AG04450 (cell line): ENCODE measurements at regions of chr19 and their contacts with region 1.

Region 1: DNA sequence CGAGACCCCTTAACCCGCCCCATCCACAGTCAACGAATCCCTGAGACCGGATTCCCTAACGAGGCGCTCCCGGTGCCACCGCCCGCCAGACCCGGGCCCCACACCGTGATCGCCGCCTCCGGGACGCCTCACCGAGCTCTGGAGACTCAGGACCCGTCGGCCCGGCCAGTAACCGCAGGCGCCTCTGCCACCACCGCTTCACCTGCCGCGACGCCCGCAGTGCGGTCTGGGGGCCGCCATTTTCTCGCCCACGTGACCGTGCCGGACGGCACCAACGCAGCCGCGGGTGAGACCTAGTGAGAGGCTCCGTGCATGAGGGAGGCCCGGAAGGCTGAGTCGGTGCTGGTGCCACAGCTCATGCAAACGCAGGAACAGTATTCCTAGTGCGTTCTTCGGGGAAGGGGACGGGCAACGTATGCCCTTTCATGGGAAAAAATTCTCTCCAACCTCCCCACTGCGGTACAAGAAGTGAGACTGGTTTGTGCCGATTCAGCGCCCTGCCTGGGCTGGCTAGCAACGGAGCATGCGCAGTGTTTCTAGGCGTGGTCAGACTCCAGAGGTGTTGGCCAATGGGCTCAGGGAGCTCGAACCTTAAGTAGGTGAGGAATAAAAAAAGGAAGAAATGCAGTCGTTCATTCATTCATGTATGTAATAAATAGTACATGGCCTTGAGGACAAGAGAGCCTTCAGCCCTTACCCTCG is at the start of gene DOHH:
- DNase-seq: peak; percentile 95
- H3K4me3 ChIP-seq: peak within 1 kb of the TSS; percentile 95
- H3K27ac ChIP-seq: peak within 1 kb of the TSS; percentile 97
- H3K27me3 ChIP-seq: no peaks in the 10 kb centered on the region
- CTCF ChIP-seq: no peak
- polyA plus RNA-seq, gene DOHH: 3.4 and 4.2 TPM in 2 replicates

Region 2: DNA sequence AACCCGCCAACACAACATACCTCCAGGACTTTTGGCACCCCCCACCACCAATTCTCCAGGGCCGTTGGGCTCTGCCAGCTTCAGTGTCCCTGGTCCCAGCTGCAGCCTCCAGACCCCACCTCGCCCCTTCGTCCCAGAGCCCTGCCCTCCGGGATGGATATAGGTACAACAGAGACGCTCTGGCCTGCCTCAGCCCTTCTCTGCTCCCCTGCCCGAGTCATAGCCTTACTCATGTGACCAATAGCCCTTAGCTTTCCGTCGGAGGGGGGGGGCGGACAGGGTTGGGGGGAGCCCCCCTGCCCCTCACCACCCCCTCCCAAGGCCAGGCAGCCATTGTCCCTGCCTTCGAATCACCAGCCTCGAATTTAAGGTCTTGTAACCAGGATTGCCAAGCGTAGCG is 205.0 kb before region 1 on chr19:
- CTCF ChIA-PET with region 1: no interaction called
- POLR2A ChIA-PET with region 1: interaction called, 11 read pairs
- DNase-seq: no peak
- H3K4me3 ChIP-seq: no peak overlapping the region
- H3K27ac ChIP-seq: no peak overlapping the region
- H3K27me3 ChIP-seq: peaks cover 17% of the 10 kb centered on the region
- CTCF ChIP-seq: no peak

Region 3: DNA sequence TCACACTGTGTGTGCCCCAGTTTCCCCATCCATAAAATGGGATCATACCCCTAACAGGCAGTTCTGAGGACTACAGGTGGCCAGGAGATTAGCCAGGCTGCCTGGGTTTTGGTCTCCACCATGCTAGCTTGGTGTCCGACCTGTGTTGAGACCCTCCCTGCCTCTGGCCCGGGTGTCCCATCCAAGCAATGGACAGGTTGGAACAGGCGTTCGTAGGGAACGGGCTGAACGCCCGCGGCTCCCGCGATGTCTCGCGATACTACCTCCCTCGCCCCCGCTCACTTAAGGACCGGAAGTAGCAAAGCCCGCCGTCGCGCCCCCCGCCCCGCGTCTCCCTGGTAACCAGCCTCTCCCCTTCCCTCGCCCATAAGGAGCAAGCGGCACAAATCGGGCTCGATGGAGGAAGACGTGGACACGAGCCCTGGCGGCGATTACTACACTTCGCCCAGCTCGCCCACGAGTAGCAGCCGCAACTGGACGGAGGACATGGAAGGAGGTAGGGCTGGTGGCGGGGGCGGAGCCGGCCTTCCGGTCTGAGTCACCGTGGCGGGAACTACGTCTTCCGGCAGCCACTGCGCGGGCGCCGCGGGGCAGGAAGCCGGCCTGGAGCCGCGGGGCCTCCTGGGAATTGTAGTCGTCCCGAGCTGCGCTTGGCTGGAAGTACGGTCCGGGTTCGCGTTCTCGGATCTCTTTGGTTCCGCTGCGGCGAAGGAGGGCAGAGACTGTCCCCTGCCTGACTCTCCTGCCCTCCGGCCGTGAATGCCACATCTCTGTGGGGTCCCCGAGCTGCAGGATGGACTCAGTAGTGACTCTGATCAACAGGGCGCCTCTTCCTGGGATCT is 65.6 kb before region 1 on chr19:
- CTCF ChIA-PET with region 1: no interaction called
- POLR2A ChIA-PET with region 1: no interaction called
- DNase-seq: peak; percentile 88
- H3K4me3 ChIP-seq: peak overlapping the region; percentile 54
- H3K27ac ChIP-seq: peak overlapping the region; percentile 89
- H3K27me3 ChIP-seq: no peaks in the 10 kb centered on the region
- CTCF ChIP-seq: no peak

Region 4: GRCh38 chr19:3450796-3451411 is 49.7 kb before region 1 on chr19:
- CTCF ChIA-PET with region 1: no interaction called
- POLR2A ChIA-PET with region 1: no interaction called
- DNase-seq: peak; percentile 99
- H3K4me3 ChIP-seq: no peak overlapping the region
- H3K27ac ChIP-seq: peak overlapping the region; percentile 98
- H3K27me3 ChIP-seq: no peaks in the 10 kb centered on the region
- CTCF ChIP-seq: no peak